Dorsolateral prefrontal cortex (tissue), 120 donors: ENCODE measurements at regions of chr17 and their contacts with region 1.

Region 1: GRCh38 chr17:65198653-65199382 is 61.6 kb downstream of the RGS9 start:
- DNase-seq: peak in 1 of 10 donors; percentile 13
- H3K4me3 ChIP-seq: no peak overlapping the region
- H3K27ac ChIP-seq: no peak overlapping the region
- H3K27me3 ChIP-seq: no peaks in the 10 kb centered on the region
- CTCF ChIP-seq: peak; percentile 66 to 95 (median 82)

Region 2: DNA sequence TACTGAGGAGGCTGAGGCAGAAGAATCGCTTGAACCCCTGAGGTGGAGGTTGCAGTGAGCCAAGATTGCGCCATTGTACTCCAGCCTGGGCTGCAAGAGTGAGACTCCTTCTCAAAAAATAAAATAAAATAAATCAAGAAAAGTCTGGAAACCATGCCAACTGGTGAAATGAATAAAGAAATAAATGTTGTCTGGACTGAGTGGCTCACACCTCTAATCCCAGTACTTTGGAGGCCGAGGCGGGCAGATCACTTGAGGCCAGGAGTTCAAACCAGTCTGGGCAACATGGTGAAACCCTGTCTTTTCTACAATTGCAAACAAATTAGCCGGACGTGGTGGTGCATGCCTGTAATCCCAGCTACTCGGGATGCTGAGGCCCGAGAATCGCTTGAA is 278.8 kb before region 1 on chr17:
- intact Hi-C with region 1: loop called in 1 of 2 experiments (anchors 5 kb)
- DNase-seq: peak in 3 of 10 donors; percentile 26 to 42 (median 32)
- H3K4me3 ChIP-seq: peak overlapping the region; percentile 47 to 94 (median 75)
- H3K27ac ChIP-seq: peak overlapping the region in 58 of 59 donors; percentile 70 to 97 (median 93)
- H3K27me3 ChIP-seq: no peaks in the 10 kb centered on the region
- CTCF ChIP-seq: no peak

Region 3: GRCh38 chr17:64964796-64965195 is 234.0 kb before region 1 on chr17:
- intact Hi-C with region 1: loop called in 1 of 2 experiments (anchors 5 kb)
- DNase-seq: no peak
- H3K4me3 ChIP-seq: peak overlapping the region in 14 of 59 donors; percentile 4 to 66 (median 55)
- H3K27ac ChIP-seq: peak overlapping the region in 13 of 59 donors; percentile 0 to 73 (median 37)
- H3K27me3 ChIP-seq: no peaks in the 10 kb centered on the region
- CTCF ChIP-seq: no peak

Region 4: GRCh38 chr17:65055348-65056261 is 143.2 kb before region 1 on chr17:
- intact Hi-C with region 1: no loop called
- DNase-seq: peak; percentile 47 to 79 (median 66)
- H3K4me3 ChIP-seq: peak overlapping the region; percentile 64 to 99 (median 87)
- H3K27ac ChIP-seq: peak overlapping the region; percentile 81 to 100 (median 99)
- H3K27me3 ChIP-seq: no peaks in the 10 kb centered on the region
- CTCF ChIP-seq: peak in 3 of 56 donors; percentile 6 to 13 (median 9)

Region 5: GRCh38 chr17:65122836-65123756 is 75.7 kb before region 1 on chr17:
- intact Hi-C with region 1: loop called in 1 of 2 experiments (anchors 5 kb)
- DNase-seq: peak; percentile 57 to 84 (median 80)
- H3K4me3 ChIP-seq: peak overlapping the region; percentile 47 to 85 (median 70)
- H3K27ac ChIP-seq: peak overlapping the region; percentile 53 to 98 (median 88)
- H3K27me3 ChIP-seq: no peaks in the 10 kb centered on the region
- CTCF ChIP-seq: peak in 22 of 56 donors; percentile 7 to 45 (median 27)

Region 6: GRCh38 chr17:65137021-65137991 is 61.5 kb before region 1 on chr17 and contains the start of gene RGS9:
- intact Hi-C with region 1: loop called in 1 of 2 experiments (anchors 5 kb)
- DNase-seq: peak; percentile 75 to 90 (median 82)
- H3K4me3 ChIP-seq: peak within 1 kb of the TSS; percentile 33 to 72 (median 61)
- H3K27ac ChIP-seq: peak within 1 kb of the TSS in 7 of 59 donors; percentile 3 to 62 (median 56)
- H3K27me3 ChIP-seq: peaks cover 0 to 8% (median 0%) of the 10 kb centered on the region in 45 donors
- CTCF ChIP-seq: peak; percentile 73 to 98 (median 92)
- total RNA-seq, gene RGS9: 4.3 to 19.6 (median 10.5) TPM

Region 7: DNA sequence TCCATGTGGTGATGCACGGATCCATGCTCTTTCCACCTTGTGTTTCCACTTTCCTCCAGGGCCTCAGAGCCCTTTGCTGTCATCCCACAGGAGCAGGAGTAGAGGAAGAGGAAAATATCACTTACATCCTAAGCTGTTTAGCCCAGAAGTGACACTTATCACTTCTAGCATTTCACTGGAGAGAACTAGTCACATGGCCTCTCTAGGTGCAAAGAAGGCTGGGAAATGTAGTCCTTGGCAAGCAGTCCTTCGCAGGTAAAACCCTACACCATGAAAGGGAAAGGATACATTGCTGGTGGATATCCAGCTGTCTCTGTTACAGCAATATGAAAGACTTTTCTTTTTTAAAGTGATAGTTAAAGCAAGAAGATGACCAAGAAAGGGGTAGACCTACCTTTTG is 124.2 kb after region 1 on chr17:
- intact Hi-C with region 1: no loop called
- DNase-seq: no peak
- H3K4me3 ChIP-seq: no peak overlapping the region
- H3K27ac ChIP-seq: no peak overlapping the region
- H3K27me3 ChIP-seq: no peaks in the 10 kb centered on the region
- CTCF ChIP-seq: no peak